Dorsolateral prefrontal cortex (tissue), 120 donors: ENCODE measurements at regions of chr3 and their contacts with region 1.

Region 1: DNA sequence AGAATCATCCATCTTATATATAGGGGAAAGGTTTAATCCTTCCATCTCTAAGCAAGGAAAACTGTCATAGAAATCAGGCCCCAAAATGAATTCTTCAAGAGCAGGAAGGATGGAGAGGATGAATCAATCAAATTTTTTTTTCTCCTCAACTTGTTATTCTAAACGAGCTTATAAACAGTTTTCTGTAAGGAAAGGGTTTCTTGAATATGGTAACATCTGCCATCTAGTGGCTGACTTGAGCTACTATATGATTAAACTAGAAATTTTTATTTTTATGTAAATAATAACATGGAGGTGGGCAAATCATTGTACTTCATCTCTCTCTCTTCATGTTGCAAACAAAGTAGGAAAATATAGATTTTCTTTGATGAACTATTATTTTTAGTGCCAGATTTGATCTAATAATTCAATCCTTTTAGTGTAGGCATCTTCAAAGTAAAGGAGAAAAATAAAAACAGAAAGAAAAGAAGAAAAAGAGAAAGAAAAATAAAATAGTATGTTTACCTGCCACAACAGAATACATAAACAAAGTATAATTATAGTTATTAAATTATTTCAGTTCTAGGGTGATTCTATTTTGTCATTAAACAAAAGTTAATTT is 146.6 kb downstream of the SERPINI1 start:
- DNase-seq: no peak
- H3K4me3 ChIP-seq: peak overlapping the region in 42 of 59 donors; percentile 0 to 55 (median 31)
- H3K27ac ChIP-seq: peak overlapping the region in 14 of 59 donors; percentile 5 to 64 (median 30)
- H3K27me3 ChIP-seq: no peaks in the 10 kb centered on the region
- CTCF ChIP-seq: peak; percentile 64 to 99 (median 84)

Region 2: DNA sequence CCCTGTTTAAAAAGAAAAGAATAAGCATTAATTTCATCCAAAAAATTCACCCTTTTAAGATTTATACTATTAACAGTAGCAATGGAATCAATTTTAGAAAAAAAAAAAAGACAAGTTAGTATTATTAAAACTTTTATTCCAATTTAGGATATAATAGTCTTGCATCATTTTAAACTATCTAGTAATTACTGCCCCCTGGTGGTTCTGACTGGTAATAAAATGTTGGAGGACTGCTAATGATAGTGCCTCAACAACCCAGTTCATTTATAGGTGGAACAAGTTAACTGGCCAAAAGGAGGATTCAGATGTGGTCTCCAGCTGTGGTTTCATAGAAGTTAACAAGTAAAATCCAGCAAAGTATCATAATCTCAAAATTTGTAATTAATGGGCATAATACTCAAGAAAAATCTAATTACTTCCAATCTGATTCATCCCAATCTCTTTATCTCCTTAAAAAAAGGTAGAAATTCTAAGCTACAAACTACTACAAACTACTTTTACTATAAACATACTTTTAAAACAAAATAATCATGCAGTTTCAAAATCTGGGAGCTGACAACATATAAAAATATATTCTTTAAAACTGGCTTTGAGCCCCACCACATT is 197.7 kb before region 1 on chr3:
- intact Hi-C with region 1: loop called in 1 of 2 experiments (anchors 10 kb)
- DNase-seq: peak in 2 of 10 donors; percentile 16 to 43
- H3K4me3 ChIP-seq: no peak overlapping the region
- H3K27ac ChIP-seq: no peak overlapping the region
- H3K27me3 ChIP-seq: no peaks in the 10 kb centered on the region
- CTCF ChIP-seq: peak; percentile 64 to 96 (median 84)